ENCODE measurements at regions of chr6 and their contacts with region 1.

Region 1: DNA sequence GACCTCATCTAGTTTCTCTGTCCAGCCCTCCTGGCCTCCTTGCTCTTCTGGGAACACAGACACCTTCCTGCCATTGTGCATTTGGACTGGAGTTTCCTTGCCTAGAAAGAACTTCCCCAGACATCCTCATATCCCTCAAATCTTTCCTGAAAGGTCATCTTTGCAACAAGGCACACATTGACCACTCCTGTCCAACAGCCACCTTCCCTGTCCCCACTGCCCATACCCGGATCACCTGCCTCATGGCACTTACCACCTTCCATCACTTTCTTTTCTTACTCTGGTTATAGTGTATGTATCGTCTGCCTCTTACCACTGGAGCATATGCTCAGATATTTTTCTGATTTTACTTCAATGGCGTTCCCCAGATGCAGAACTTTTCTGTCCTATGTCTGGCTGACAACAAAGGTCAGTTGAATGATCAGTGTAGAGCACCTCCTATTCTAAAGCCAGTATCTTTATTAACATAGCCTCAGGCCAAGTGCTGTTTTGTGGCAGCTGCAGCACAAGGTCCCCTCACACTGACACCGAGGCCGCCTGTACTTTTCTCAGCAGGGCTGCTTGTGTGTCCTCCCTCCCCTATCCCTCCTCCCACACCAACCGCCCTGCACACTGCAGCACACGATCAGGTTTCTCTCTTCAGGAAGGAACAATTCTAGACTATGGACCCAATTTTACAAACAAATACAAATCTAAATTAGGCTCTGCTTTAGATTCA is 4.1 kb downstream of the HLA-C start:
- DNase-seq: no peak
- ATAC-seq: no peak
- H3K4me3 ChIP-seq: no peak overlapping the region
- H3K27ac ChIP-seq: no peak overlapping the region
- H3K4me1 ChIP-seq: no peaks in the 10 kb centered on the region
- H3K27me3 ChIP-seq: no peaks in the 10 kb centered on the region
- CTCF ChIP-seq: no peak

Region 2: GRCh38 chr6:31351401-31352309 is 83.8 kb after region 1 on chr6:
- CTCF ChIA-PET with region 1: no interaction called
- POLR2A ChIA-PET with region 1: no interaction called
- in situ Hi-C with region 1: no loop called
- intact Hi-C with region 1: loop called (anchors 2 kb)
- DNase-seq: no peak
- ATAC-seq: no peak
- H3K4me3 ChIP-seq: no peak overlapping the region
- H3K27ac ChIP-seq: no peak overlapping the region
- H3K4me1 ChIP-seq: no peaks in the 10 kb centered on the region
- H3K27me3 ChIP-seq: no peaks in the 10 kb centered on the region; the same call in none of the 2 replicates
- CTCF ChIP-seq: no peak

Measured in Panc1 (cell line).